Natural killer cell (primary cell): ENCODE measurements at regions of chr11 and their contacts with region 1.

Region 1: DNA sequence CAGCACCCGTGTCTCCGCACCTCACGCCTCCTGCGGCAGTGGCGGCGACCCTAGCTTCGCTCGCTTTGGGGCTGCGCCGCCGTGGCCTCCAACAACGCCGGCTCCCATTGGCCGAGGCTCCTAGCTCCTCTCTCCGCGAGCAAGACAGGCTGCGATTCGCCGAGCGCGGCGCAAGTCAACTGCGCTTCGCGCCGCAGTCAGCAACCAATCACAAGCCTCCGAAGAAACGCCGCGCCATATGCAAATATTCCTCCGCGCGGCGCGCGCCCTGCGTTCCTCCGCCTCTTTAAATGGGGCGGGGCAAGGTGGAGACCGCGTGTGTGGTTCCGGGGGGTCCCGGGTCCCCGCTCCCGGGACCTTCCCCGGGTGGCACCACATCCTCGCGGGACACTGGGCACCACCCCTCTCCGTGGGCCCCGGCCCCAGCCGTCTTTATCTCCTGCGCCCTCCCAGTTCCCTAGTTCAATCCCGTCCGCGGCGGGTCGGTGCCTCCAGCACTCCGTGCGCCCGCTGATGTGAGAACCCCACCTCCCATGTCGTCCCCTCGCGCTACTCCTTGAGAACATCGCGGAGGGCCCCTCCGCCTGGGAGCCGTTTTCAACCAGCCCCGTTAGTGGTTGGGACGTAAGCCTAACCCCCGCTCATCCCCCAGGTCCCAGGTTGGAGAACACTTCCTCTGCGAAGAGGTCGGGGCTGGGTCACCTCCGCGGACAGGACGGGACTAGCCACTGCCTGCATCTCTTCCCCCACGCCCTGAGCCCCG is at the start of gene NAP1L4:
- DNase-seq: peak; percentile 95 to 99
- ATAC-seq: peak; percentile 85 to 94 (median 90)
- H3K4me3 ChIP-seq: peak within 1 kb of the TSS; percentile 62
- H3K4me3 Mint-ChIP-seq: peak within 1 kb of the TSS; percentile 99
- H3K27ac ChIP-seq: peak within 1 kb of the TSS; percentile 72
- H3K27ac Mint-ChIP-seq: peak within 1 kb of the TSS; percentile 79 to 99
- H3K4me1 ChIP-seq: peaks cover 30% of the 10 kb centered on the region
- H3K4me1 Mint-ChIP-seq: peaks cover 40 to 52% of the 10 kb centered on the region in 2 donors
- H3K27me3 ChIP-seq: no peaks in the 10 kb centered on the region
- H3K27me3 Mint-ChIP-seq: no peaks in the 10 kb centered on the region
- CTCF ChIP-seq: no peak
- total RNA-seq, gene NAP1L4: 219 to 244 (median 237) TPM

Region 2: DNA sequence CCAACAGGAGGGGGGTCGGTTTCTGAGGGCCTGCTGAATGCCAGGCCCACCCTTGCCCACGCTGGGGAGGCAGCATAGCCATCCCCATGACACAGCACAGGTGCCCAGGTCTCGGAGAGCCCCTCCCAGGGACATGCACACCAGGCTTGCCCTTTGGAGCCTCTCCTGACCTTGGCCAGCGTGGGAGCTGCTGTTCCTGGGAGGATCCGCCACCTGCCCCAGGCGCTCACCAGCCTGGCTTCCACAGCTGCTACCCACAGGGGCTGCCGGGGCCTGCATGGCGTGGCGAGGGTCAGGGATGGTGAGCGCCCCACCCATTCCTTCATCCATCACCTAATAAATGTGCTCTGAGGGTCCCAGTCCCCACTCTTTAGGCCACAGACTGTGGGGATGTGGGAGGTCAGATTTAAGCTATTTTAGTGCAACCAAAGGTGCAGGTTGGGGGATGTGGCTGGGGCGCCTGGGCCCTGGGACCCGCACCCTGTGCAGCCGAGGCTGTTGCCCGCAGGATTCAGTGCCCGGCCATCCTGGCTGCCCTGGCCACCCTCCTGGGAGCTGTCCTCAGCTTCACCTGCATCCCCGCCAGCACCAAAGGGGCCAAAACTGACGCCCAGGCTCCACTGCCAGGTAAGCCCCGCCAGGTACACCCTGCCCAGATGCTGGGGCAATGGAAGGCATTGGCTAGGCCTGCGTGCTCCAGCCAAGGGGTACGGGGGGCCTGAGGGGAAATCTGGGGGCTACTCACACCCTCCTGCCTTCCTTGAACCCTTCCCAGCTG is 76.1 kb before region 1 on chr11:
- intact Hi-C with region 1: no loop called
- DNase-seq: no peak
- ATAC-seq: no peak
- H3K4me3 ChIP-seq: no peak overlapping the region
- H3K4me3 Mint-ChIP-seq: no peak overlapping the region
- H3K27ac ChIP-seq: no peak overlapping the region
- H3K27ac Mint-ChIP-seq: no peak overlapping the region
- H3K4me1 ChIP-seq: peaks cover 16% of the 10 kb centered on the region
- H3K4me1 Mint-ChIP-seq: peaks cover 10 to 13% of the 10 kb centered on the region in 2 donors
- H3K27me3 ChIP-seq: no peaks in the 10 kb centered on the region
- H3K27me3 Mint-ChIP-seq: no peaks in the 10 kb centered on the region
- CTCF ChIP-seq: no peak

Region 3: GRCh38 chr11:2930704-2931428 is 61.5 kb before region 1 on chr11:
- intact Hi-C with region 1: loop called (anchors 5 kb)
- DNase-seq: peak in 1 of 2 donors; percentile 60
- ATAC-seq: no peak
- H3K4me3 ChIP-seq: peak overlapping the region; percentile 19
- H3K4me3 Mint-ChIP-seq: peak overlapping the region; percentile 78
- H3K27ac ChIP-seq: no peak overlapping the region
- H3K27ac Mint-ChIP-seq: peak overlapping the region; percentile 69 to 92
- H3K4me1 ChIP-seq: peaks cover 50% of the 10 kb centered on the region
- H3K4me1 Mint-ChIP-seq: peaks cover 17 to 39% of the 10 kb centered on the region in 2 donors
- H3K27me3 ChIP-seq: peaks cover 31% of the 10 kb centered on the region
- H3K27me3 Mint-ChIP-seq: peaks cover 10 to 22% of the 10 kb centered on the region in 2 donors
- CTCF ChIP-seq: peak; percentile 30

Region 4: DNA sequence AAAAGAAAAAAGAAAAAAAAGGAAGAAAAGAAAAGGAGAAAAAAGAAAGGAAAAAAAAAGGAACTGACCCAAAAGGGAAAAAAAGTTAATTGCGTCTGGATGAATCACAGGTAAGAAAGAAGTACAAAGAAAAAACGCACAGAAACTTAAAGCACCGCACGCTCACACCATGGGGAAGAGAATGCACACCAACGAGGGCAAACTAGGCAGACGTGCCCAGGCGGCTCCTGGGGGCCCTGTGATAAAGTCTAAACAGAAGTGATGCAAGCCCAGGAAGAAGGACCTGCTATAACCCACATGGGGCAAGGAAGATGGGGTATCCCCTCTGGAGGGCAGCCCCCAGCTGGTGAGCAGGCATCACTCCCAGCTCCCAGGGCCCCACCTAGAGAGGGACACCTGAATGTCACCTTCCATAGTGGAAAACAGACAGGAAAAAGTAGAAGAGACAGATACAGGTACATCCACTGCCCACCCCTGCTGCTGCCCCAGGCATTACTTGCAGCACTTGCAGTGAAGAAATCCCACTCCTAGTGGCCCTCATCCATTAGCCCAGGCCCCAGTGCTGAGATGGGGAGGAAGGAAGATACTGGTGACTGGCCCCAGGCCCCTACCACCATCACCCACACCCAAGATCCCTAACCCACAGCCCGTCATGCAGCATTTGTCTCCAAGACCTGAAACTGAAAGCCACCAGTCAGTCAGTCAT is 29.1 kb before region 1 on chr11:
- intact Hi-C with region 1: no loop called
- DNase-seq: no peak
- ATAC-seq: no peak
- H3K4me3 ChIP-seq: no peak overlapping the region
- H3K4me3 Mint-ChIP-seq: no peak overlapping the region
- H3K27ac ChIP-seq: no peak overlapping the region
- H3K27ac Mint-ChIP-seq: no peak overlapping the region
- H3K4me1 ChIP-seq: no peaks in the 10 kb centered on the region
- H3K4me1 Mint-ChIP-seq: peaks cover 14 to 33% of the 10 kb centered on the region in 2 donors
- H3K27me3 ChIP-seq: no peaks in the 10 kb centered on the region
- H3K27me3 Mint-ChIP-seq: no peaks in the 10 kb centered on the region
- CTCF ChIP-seq: no peak

Region 5: GRCh38 chr11:3057069-3057963 is 64.9 kb after region 1 on chr11 and contains the start of gene CARS1:
- intact Hi-C with region 1: loop called (anchors 5 kb)
- DNase-seq: peak; percentile 88 to 96
- ATAC-seq: peak; percentile 97 to 99 (median 98)
- H3K4me3 ChIP-seq: peak within 1 kb of the TSS; percentile 83
- H3K4me3 Mint-ChIP-seq: peak within 1 kb of the TSS; percentile 91
- H3K27ac ChIP-seq: peak within 1 kb of the TSS; percentile 37
- H3K27ac Mint-ChIP-seq: peak within 1 kb of the TSS; percentile 80 to 93
- H3K4me1 ChIP-seq: peaks cover 20% of the 10 kb centered on the region
- H3K4me1 Mint-ChIP-seq: peaks cover 36% of the 10 kb centered on the region in 2 donors
- H3K27me3 ChIP-seq: no peaks in the 10 kb centered on the region
- H3K27me3 Mint-ChIP-seq: no peaks in the 10 kb centered on the region
- CTCF ChIP-seq: no peak
- total RNA-seq, gene CARS1: 47.9 to 51.3 (median 50.3) TPM

Region 6: DNA sequence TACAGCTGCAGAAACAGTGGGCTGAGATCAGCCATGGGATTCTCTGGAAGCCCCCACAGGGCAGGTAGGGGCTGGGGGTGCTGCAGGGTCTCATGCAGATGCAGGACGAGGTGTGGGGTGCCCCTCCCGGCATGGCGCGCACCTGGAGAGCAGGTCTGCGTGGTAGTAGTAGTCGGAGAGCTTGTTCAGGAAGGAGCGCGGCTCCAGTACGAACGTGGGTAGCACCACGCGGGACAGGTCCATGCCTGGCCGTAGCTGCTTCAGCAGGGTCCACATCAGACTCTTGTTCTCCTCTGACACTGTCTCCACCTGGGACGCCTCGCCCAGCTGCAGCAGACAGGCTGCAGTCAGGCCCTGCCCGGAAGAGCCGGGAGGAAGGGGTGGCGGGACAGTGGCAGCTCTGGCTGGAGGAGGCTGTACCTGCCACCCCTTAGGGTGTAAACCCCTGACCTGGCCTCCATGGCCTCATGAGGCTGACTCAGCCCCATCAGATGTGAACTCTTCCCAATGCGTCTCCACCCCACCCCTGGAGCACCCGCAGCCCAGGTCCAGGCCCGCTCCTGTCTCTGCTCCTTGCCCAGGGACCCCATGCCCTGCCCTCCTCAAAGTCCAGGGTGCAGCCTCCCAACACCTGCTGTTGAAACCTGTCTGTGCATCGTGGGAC is 111.8 kb after region 1 on chr11:
- intact Hi-C with region 1: loop called (anchors 5 kb)
- DNase-seq: peak in 1 of 2 donors; percentile 14
- ATAC-seq: no peak
- H3K4me3 ChIP-seq: no peak overlapping the region
- H3K4me3 Mint-ChIP-seq: no peak overlapping the region
- H3K27ac ChIP-seq: no peak overlapping the region
- H3K27ac Mint-ChIP-seq: peak overlapping the region in 1 of 2 donors; percentile 89
- H3K4me1 ChIP-seq: peaks cover 32% of the 10 kb centered on the region
- H3K4me1 Mint-ChIP-seq: peaks cover 30 to 59% of the 10 kb centered on the region in 2 donors
- H3K27me3 ChIP-seq: no peaks in the 10 kb centered on the region
- H3K27me3 Mint-ChIP-seq: no peaks in the 10 kb centered on the region
- CTCF ChIP-seq: no peak

Region 7: DNA sequence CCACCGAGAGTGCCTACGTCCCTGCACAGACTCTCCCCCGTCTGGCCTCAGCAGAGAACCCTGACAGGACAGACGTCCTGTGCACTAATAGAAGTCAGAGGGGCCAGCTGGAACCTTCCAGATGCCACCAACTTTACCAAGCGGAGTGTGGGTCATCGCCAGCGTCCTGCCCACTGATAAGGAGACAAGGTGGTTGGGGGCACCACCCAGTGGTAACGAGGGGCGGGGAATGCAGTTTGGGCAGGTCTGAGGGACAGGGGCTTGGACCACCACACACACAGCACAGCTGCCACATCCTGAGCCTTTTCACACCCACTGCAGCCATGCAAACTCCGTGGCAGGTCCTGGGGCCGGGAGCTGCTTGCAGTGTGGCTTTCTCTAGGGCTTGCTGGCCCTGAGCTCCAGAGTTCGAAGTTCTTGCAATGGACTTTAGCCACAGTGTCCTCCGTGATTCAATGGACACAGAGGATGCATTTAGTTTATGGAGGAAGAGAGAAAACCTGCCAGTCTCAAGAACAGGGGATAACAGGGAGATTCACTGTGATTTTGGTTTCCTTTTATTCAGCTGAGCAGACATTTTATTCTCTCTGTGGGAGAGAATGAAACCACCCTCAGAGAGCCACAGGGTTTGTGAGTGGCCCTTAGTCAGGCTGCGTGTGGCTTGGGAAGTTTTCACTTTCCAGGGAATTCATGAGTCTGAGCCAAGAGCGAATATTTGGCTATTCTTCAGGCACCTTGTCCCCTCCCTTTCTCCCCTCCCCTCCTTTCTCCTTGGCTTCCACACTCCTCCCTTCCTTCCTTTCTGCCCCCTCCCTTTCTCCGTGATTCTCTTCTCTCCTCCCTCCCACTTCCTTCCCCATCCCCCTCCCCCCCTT is 213.1 kb after region 1 on chr11:
- intact Hi-C with region 1: loop called (anchors 5 kb)
- DNase-seq: peak; percentile 28 to 37
- ATAC-seq: peak; percentile 50 to 78 (median 69)
- H3K4me3 ChIP-seq: no peak overlapping the region
- H3K4me3 Mint-ChIP-seq: peak overlapping the region; percentile 75
- H3K27ac ChIP-seq: peak overlapping the region; percentile 15
- H3K27ac Mint-ChIP-seq: no peak overlapping the region
- H3K4me1 ChIP-seq: peaks cover 56% of the 10 kb centered on the region
- H3K4me1 Mint-ChIP-seq: peaks cover 15 to 19% of the 10 kb centered on the region in 2 donors
- H3K27me3 ChIP-seq: peaks cover 28% of the 10 kb centered on the region
- H3K27me3 Mint-ChIP-seq: peaks cover 0 to 14% of the 10 kb centered on the region in 2 donors
- CTCF ChIP-seq: no peak